Left cardiac atrium (tissue), 4 donors: ENCODE measurements at regions of chr6 and their contacts with region 1.

Region 1: GRCh38 chr6:109783250-109783986 is 92.3 kb downstream of the FIG4 start:
- DNase-seq: no peak
- ATAC-seq: no peak

Region 2: GRCh38 chr6:109705258-109705657 is 78.2 kb before region 1 on chr6:
- intact Hi-C with region 1: loop called in 1 of 2 experiments (anchors 5 kb)
- DNase-seq: peak; percentile 78
- ATAC-seq: peak; percentile 94 to 95

Region 3: DNA sequence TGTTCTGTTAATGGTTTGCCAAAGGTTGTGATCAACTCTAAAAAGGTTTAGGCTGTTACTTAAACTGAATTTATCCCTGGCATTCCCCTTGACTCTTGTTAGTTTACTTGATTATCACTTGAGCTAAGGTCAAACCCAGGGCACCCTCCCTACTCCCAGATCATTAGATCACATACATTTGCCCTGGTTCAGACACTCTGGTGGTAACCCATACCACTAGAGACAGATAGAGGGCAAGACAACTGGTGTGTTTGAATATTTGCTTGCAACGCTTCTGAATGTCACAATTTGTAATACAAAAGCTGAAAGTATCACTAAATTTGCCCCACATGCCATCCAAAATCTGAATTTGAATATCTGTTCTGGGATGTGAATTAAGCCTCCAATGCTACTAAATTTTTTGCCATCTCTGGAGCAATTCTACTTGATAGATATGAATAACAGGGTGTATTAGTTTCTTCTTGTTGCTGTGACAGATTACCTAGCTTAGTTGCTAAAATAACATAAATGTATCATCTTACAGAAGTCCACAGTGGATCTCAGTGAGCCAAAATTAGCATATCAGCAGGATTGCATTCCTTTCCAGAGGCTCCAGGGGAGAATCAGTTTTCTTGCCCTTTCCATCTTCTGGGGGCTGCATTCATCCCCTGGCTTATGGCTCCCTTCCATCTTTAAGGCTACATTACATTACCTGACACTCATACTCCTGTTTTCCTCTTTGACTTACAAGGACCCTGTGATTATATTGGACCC is 47.0 kb before region 1 on chr6:
- intact Hi-C with region 1: no loop called
- DNase-seq: no peak
- ATAC-seq: no peak